Mammary epithelial cell (primary cell): ENCODE measurements at regions of chr7 and their contacts with region 1.

Region 1: DNA sequence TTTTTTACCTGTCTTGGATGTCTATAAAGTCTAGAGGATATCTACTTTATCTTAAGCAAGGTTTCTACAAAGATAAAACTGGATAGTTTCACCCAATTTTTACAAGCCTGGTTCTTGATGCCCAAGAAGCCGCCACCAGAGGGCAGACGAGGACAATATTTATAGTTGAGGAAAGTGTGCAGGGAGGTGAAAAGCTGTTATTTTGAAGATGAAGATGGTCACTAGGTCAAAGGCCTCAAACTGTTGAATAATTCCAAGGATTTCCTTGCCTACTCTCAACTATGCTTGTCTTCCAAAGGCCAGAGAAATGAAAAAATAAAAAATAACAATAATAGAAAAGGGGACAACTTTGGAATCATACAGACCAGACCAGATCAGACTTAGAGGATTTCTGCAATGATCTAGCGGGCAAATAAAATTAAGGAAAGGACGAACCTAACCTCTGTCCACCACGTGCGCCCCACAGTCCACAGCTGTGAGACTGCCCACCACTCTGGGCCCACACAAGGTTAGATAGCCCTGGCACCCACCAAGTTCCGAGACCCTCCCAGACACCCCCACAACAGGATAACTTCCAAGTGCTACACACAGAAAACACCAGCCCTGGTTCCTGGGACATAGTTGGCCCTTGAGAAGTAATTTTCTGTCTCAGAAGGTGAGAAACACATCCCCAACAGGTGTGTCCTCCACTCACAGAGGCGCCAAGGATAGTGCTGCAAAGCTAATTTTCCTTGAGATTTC is 2.8 kb downstream of the PKD1L1 start:
- DNase-seq: peak; percentile 30
- H3K4me3 ChIP-seq: no peak overlapping the region
- H3K27ac ChIP-seq: no peak overlapping the region
- H3K4me1 ChIP-seq: peaks cover 16% of the 10 kb centered on the region
- H3K27me3 ChIP-seq: no peaks in the 10 kb centered on the region
- CTCF ChIP-seq: peak; percentile 66 to 74

Region 2: DNA sequence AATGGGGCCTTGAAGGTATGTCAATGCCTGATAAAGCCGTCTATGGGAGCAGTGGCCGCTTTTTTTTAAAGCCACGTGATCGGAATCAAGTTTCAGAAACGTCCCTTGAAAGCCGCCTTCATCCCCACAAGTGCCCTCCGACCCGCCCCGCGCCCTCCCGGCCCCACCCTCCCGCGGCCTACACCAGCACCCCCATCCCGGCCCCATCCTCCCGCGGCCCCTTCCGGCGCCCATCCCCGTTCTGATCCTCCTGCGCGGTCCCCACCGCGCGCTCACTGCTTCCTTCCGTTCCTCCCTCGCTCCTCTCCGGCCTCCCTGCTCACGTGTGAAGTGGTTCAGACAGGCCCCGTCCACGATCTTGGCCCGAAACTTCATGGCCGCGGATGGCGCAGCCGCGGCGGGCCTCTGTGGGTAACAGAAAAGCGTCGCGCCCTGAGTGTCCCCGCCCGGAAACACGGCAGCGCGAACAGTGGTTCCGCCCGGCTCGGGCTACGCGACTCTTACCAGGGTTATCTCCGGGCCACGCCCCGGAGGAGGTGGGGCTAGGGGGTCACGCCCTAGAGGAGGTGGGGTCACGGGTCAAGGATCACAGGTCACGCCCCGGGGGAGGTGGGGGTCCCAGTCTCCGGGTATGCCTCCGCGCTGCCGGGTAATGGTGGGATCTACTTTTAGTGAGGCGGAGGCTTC is 33.9 kb after region 1 on chr7 and contains the start of gene HUS1:
- CTCF ChIA-PET with region 1: no interaction called
- dilution Hi-C with region 1: loop called (anchors 5 kb)
- in situ Hi-C with region 1: no loop called
- intact Hi-C with region 1: no loop called
- DNase-seq: peak; percentile 85
- H3K4me3 ChIP-seq: peak within 1 kb of the TSS; percentile 73 to 90 (median 78)
- H3K27ac ChIP-seq: peak within 1 kb of the TSS; percentile 50
- H3K4me1 ChIP-seq: peaks cover 10% of the 10 kb centered on the region
- H3K27me3 ChIP-seq: no peaks in the 10 kb centered on the region
- CTCF ChIP-seq: no peak
- total RNA-seq, gene HUS1: 31.3 to 36.8 TPM

Region 3: GRCh38 chr7:48041653-48041970 is 96.2 kb after region 1 on chr7:
- CTCF ChIA-PET with region 1: no interaction called
- dilution Hi-C with region 1: no loop called
- in situ Hi-C with region 1: no loop called
- intact Hi-C with region 1: no loop called
- DNase-seq: peak; percentile 56
- H3K4me3 ChIP-seq: peak overlapping the region in 1 of 3 experiments; percentile 3
- H3K27ac ChIP-seq: peak overlapping the region; percentile 77
- H3K4me1 ChIP-seq: peaks cover 34% of the 10 kb centered on the region
- H3K27me3 ChIP-seq: no peaks in the 10 kb centered on the region
- CTCF ChIP-seq: no peak

Region 4: DNA sequence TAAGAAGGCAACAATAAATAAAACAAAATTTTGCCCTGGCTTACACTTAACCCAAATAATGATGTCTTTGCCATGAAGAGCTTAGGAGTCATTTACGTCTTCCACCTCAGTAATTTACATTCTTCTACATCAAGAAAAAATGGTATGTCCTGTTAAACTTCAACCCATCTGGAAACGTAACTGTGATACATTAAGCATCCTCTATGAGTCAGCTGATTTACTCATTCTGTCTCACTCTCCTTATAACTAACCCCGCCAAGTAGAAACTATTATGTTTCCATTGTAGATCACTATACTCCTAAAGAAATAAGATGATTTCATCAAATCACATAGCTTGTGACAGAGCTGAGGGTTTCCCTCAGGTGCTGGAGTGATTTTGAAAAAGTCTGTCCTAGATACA is 1309.6 kb after region 1 on chr7:
- CTCF ChIA-PET with region 1: no interaction called
- dilution Hi-C with region 1: no loop called
- in situ Hi-C with region 1: no loop called
- intact Hi-C with region 1: no loop called
- DNase-seq: peak; percentile 1
- H3K4me3 ChIP-seq: no peak overlapping the region
- H3K27ac ChIP-seq: no peak overlapping the region
- H3K4me1 ChIP-seq: no peaks in the 10 kb centered on the region
- H3K27me3 ChIP-seq: peaks cover 3% of the 10 kb centered on the region
- CTCF ChIP-seq: no peak